HEK293T (cell line): ENCODE measurements at regions of chr7 and their contacts with region 1.

Region 1: DNA sequence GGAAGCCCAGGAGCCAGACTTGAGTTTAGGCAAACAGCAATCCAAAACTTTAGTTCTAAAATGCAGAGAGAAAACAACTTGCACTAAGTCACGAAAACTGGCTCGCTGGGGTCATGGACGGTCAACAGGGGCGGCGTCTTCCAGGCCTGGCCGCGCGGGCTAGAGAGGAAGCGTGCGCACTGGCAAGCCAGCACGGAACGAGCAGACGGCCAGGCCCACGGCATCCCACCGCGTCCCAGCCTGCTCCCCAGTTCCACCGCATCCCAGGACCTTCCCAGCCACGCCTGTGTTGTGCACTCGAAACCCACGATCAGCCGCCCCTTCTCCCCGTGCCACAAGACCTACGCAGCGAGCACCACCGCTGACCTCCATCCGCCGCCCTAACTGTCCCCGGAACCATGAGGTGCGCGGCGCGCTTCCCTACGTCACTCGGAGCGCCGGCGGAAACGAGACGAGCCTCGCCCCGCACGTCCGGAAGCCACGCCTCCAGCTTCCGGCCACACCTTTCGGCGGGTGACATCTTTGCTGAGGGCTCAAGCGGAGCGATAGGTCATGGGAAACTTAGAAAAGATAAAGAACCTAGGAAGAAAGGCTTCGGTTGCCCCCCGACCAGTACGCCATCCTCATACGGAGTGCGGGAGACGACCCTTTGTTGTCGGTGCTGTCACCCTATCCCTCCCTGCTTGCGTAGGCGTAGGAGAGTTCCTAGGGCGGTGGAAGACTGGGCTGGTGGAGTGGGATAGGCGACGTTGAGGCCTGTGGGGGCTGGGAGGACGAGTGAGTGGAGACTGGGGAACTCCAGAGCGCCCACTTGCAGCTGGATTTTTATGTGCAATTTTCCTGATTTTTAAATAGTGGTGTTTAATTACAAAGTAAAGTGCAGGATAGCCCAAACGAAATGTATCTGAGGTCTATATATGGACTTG is at the start of gene TBRG4:
- DNase-seq: peak; percentile 94

Region 2: DNA sequence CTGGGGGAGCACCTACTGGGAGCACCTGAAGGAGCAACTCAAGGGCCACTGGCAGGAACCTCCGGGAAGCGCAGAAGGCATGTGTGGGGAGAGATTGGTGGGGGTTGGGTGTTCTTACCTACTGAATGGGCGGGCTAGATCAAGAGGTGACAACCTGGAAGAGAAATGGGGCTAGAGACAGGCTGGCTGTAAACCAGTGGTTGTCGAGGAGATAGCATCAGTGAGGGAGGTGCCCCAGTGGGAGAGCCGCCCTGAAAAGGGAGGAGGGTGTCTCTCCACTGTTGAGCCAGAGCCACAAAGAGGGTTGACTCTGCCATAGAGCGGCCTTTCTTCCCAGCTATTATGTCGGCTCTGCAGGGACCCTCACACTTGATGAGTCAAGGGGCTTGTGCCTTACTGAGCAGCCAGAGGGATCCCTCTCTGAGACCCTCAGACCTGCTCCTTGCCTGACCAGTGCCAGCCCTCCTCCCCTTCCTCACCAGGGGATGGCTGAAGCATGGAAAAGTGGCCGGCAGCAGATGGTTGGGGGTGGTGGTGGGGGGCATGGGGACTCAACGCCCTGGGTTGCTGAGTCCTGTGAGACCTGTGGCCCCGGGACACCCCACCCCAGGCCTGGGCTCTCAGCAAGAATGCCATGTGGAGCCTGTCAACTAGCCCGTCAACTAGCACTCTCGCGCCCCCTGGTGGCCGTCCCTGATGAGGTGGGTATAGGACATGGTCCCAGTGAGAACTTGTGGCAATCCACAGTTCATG is 189.8 kb before region 1 on chr7:
- CTCF ChIA-PET with region 1: no interaction called
- POLR2A ChIA-PET with region 1: no interaction called
- DNase-seq: peak; percentile 80

Region 3: GRCh38 chr7:44980393-44981034 is 131.0 kb before region 1 on chr7:
- CTCF ChIA-PET with region 1: no interaction called
- POLR2A ChIA-PET with region 1: interaction called, 15 read pairs
- DNase-seq: no peak

Region 4: GRCh38 chr7:44999245-45000095 is 112.1 kb before region 1 on chr7:
- CTCF ChIA-PET with region 1: no interaction called
- POLR2A ChIA-PET with region 1: interaction called, 10 read pairs
- DNase-seq: peak; percentile 96

Region 5: DNA sequence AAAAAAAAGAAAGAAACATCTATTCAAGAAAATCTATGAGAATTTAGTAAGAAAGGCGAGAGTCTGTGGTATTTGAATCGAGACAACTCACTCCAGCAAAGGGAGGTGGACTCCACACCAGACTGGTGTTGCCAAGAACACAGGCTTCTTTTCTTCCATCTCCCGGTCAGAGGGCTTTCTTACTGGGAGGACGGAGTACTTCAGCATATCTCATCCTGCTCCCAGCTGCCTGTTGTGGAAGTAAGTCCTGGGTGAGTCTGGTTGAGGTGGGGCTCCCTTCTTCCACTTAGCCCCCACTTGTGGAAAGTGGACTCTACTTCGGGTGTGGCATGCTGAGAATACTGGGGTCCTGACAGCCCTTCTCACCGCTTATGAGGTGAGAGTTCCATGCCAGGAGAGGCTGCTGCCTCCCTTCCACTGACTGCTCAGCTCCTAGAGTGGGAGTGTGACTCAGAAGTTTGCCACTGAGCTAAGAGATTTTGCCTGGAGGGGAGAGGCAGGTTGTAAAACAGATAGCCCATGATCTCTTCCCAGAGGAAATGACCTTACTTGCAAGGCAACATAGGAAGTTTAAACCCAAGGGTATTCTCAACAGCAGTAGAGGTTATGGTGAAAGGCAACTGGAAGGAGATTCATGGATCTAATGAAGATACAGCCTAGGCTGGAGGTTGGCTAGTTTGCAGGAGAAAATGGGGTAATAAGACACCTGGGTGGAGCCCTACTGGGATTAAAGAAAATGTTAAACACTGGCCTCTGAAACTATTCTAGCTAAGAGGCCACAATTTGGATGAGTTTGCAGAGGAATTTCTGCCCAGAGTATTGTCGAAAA is 19.2 kb before region 1 on chr7:
- CTCF ChIA-PET with region 1: no interaction called
- POLR2A ChIA-PET with region 1: interaction called, 12 read pairs
- DNase-seq: peak; percentile 34

Region 6: DNA sequence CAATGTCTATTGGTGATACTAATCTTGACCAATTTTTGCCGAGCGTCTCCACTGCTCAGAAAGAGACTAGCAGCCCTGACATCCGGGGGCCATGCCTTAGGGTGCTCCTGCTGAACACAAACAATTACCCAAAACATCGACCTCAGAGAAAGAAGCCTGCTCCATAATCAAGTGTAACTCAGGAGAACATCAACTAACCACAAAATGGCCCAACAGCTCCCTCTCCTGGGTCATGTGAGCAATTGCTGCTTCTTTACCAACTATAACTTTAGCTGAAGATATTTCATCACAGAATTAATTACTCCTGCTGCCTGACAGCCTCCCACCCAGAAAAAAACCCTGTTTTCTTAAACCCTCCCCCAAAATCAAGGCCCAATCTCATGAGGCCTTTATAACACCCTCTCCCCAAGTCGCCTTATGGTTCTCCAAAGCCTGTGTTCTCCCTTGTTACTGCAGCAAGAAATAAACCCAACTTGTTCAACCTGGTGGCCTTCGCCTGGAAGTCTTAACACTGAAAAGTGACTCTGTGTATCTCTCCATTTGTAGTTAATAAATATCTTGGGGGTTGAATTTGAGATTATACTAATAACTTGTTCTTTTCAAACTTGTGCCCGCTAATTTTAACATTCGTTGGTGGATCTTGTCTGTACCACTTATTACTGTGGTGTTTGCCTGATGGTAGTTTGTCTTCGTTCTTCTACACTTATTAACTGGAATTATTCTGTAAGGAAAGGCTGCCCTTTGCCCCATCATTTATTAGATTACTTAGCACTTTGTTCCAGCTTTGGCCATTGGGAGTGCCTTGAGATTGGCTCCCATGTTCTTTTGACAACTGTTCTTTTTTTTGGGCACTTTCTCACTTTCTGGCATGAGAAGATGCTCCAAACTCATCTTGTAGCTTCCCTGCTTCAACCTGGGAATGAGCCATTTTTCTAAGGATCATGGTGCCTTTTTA is 24.8 kb after region 1 on chr7:
- CTCF ChIA-PET with region 1: no interaction called
- POLR2A ChIA-PET with region 1: interaction called, 18 read pairs
- DNase-seq: peak; percentile 79